AG04450 (cell line): ENCODE measurements at regions of chr11 and their contacts with region 1.

Region 1: GRCh38 chr11:35822815-35823495 is 120.9 kb upstream of the LDLRAD3 start:
- DNase-seq: no peak
- H3K4me3 ChIP-seq: no peak overlapping the region
- H3K27ac ChIP-seq: no peak overlapping the region
- H3K27me3 ChIP-seq: no peaks in the 10 kb centered on the region
- CTCF ChIP-seq: no peak

Region 2: DNA sequence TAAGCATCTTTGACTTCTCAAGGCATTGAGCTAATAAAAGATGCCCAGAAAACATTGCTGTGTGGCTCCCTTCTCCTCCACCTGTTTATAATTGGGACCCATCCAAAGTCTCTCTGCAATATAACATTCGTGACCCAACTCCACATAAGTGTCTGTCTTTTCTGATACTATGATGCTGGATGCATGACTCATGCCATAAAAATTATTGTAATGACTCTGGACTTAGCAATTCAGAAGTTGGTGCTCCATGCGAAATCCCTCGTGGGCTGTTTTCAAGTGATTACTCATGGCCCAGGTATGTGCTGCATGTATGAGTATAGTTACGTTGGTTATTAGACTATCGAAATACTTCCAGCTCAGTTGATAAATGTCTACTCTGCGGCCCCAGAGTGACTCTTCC is 193.0 kb before region 1 on chr11:
- CTCF ChIA-PET with region 1: interaction called, 19 read pairs
- POLR2A ChIA-PET with region 1: no interaction called
- DNase-seq: peak; percentile 97
- H3K4me3 ChIP-seq: no peak overlapping the region
- H3K27ac ChIP-seq: peak overlapping the region; percentile 4
- H3K27me3 ChIP-seq: no peaks in the 10 kb centered on the region
- CTCF ChIP-seq: no peak

Region 3: DNA sequence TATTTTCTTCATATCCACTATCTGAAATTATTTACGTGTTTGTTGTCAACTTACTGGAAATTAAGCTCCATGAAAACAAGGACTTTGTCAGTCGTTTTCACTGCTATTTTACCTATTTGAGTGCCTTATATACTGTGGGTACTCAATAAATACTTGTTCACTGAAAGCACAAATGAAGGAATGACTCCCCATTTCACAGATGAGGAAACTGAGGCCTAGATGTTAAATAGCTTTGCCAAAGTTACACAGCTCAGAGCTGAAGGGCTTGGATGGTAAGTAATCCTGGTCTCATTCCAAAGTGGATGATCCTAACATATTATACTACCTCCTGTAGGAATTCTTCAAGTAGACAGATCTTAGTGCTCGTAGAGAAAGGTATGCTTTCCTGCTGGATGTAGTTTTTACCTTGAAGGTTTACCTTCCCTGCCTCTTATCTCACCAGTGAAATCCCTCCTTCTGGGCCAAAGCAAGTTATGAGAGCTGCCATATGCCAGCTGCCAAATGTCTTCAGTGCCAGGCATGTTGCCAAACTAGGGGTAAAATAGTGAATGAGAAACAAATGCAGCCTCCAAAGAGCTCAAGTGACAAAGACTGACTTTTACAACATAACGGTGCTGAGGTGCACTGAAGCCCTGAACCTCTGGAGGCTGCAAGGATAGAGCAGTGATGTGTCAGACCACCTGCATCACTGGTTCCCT is 30.7 kb before region 1 on chr11:
- CTCF ChIA-PET with region 1: interaction called, 104 read pairs
- POLR2A ChIA-PET with region 1: no interaction called
- DNase-seq: no peak
- H3K4me3 ChIP-seq: no peak overlapping the region
- H3K27ac ChIP-seq: no peak overlapping the region
- H3K27me3 ChIP-seq: no peaks in the 10 kb centered on the region
- CTCF ChIP-seq: no peak

Region 4: GRCh38 chr11:35878741-35879140 is 55.8 kb after region 1 on chr11:
- CTCF ChIA-PET with region 1: interaction called, 18 read pairs
- POLR2A ChIA-PET with region 1: no interaction called
- DNase-seq: no peak
- H3K4me3 ChIP-seq: no peak overlapping the region
- H3K27ac ChIP-seq: no peak overlapping the region
- H3K27me3 ChIP-seq: peaks cover 28% of the 10 kb centered on the region
- CTCF ChIP-seq: no peak

Region 5: DNA sequence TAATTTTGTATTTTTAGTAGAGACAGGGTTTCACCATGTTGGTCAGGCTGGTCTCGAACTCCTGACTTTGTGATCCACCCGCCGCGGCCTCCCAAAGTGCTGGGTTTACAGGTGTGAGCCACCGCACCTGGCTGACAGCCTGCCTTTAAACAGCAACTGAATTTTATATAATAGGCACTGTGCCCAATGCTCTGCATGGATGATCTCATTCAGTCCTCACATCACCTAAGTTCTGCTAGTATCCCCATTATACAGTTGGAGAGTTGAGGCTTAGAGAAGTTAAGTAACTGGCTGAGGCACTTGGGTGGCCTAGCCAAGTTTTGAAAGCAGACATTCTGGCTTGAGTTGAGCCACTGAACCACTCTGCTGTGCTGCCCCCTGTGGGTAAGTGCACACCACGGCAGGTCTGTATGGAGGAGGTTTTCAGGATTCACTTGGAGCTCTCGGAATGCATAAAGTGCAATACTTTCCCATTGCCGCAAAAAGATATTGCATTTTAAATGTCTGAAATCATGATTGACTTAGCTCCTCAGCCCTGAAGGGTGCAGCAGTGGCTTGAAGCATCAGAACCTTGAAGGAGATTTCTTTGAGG is 233.3 kb after region 1 on chr11:
- CTCF ChIA-PET with region 1: interaction called, 37 read pairs
- POLR2A ChIA-PET with region 1: no interaction called
- DNase-seq: no peak
- H3K4me3 ChIP-seq: no peak overlapping the region
- H3K27ac ChIP-seq: no peak overlapping the region
- H3K27me3 ChIP-seq: no peaks in the 10 kb centered on the region
- CTCF ChIP-seq: peak; percentile 52

Region 6: DNA sequence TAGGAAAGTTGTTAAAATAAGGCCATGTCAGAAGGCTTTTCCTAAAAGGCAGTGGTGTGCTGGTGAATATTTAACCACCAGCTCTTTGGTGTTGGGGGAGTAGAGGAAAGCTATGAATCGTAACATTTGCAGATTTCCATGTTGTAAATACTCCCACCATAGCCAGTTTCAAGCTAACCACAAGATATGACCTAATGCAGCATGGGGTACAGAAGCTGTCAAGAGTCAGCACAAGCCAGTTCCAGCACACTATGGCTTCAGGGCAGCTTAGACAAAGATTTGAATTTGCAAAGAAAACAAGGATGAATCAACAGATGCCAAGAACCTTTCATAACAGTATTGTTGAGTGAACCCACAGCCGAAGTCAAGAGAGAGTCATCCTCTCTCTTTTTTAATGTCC is 426.3 kb after region 1 on chr11:
- CTCF ChIA-PET with region 1: interaction called, 32 read pairs
- POLR2A ChIA-PET with region 1: no interaction called
- DNase-seq: peak; percentile 77
- H3K4me3 ChIP-seq: no peak overlapping the region
- H3K27ac ChIP-seq: no peak overlapping the region
- H3K27me3 ChIP-seq: peaks cover 14% of the 10 kb centered on the region
- CTCF ChIP-seq: no peak

Region 7: GRCh38 chr11:36372101-36372767 is 549.3 kb after region 1 on chr11:
- CTCF ChIA-PET with region 1: no interaction called
- POLR2A ChIA-PET with region 1: no interaction called
- DNase-seq: peak; percentile 39
- H3K4me3 ChIP-seq: no peak overlapping the region
- H3K27ac ChIP-seq: no peak overlapping the region
- H3K27me3 ChIP-seq: no peaks in the 10 kb centered on the region
- CTCF ChIP-seq: no peak

Region 8: GRCh38 chr11:36492724-36493304 is 669.9 kb after region 1 on chr11:
- CTCF ChIA-PET with region 1: interaction called, 13 read pairs
- POLR2A ChIA-PET with region 1: no interaction called
- DNase-seq: no peak
- H3K4me3 ChIP-seq: no peak overlapping the region
- H3K27ac ChIP-seq: no peak overlapping the region
- H3K27me3 ChIP-seq: no peaks in the 10 kb centered on the region
- CTCF ChIP-seq: peak; percentile 79